ENCODE measurements at regions of chr2 and their contacts with region 1.

Region 1: DNA sequence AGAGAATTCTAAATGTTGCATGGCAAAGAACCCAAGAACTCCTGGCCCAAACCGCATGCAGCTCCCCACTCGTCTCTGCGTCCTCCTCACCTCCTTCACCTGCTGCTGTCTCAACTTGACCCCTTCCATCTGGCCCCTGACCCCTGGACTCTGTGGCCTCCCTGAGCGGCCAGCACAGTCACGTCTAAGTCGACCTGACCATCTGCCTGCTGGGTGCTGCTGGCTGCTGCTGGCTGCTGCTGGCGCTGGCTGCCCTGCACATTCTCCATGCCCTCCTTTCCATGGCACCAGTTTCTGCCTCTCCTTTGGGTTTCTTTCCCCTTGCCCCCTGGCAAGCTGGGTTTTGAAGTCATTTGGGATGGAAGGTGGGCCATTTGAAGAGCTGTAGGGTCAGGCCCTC is 30.1 kb upstream of the ASB1 start:
- DNase-seq: no peak
- ATAC-seq: no peak
- H3K4me3 ChIP-seq: no peak overlapping the region
- H3K27ac ChIP-seq: no peak overlapping the region
- H3K4me1 ChIP-seq: no peaks in the 10 kb centered on the region
- H3K27me3 ChIP-seq: no peaks in the 10 kb centered on the region
- CTCF ChIP-seq: no peak

Region 2: GRCh38 chr2:238370823-238371372 is 25.8 kb before region 1 on chr2:
- CTCF ChIA-PET with region 1: no interaction called
- POLR2A ChIA-PET with region 1: no interaction called
- intact Hi-C with region 1: no loop called
- DNase-seq: peak; percentile 71
- ATAC-seq: peak; percentile 99
- H3K4me3 ChIP-seq: no peak overlapping the region
- H3K27ac ChIP-seq: no peak overlapping the region
- H3K4me1 ChIP-seq: no peaks in the 10 kb centered on the region
- H3K27me3 ChIP-seq: no peaks in the 10 kb centered on the region
- CTCF ChIP-seq: peak; percentile 93

Region 3: GRCh38 chr2:239143858-239144718 is 747.4 kb after region 1 on chr2:
- CTCF ChIA-PET with region 1: no interaction called
- POLR2A ChIA-PET with region 1: interaction called, 14 read pairs
- intact Hi-C with region 1: no loop called
- DNase-seq: peak; percentile 25
- ATAC-seq: peak; percentile 68; the same call in 1 of the 2 replicates
- H3K4me3 ChIP-seq: no peak overlapping the region
- H3K27ac ChIP-seq: no peak overlapping the region
- H3K4me1 ChIP-seq: peaks cover 4% of the 10 kb centered on the region; the same call in 1 of the 2 replicates
- H3K27me3 ChIP-seq: no peaks in the 10 kb centered on the region
- CTCF ChIP-seq: peak; percentile 72